ENCODE measurements at regions of chr17 and their contacts with region 1.

Region 1: DNA sequence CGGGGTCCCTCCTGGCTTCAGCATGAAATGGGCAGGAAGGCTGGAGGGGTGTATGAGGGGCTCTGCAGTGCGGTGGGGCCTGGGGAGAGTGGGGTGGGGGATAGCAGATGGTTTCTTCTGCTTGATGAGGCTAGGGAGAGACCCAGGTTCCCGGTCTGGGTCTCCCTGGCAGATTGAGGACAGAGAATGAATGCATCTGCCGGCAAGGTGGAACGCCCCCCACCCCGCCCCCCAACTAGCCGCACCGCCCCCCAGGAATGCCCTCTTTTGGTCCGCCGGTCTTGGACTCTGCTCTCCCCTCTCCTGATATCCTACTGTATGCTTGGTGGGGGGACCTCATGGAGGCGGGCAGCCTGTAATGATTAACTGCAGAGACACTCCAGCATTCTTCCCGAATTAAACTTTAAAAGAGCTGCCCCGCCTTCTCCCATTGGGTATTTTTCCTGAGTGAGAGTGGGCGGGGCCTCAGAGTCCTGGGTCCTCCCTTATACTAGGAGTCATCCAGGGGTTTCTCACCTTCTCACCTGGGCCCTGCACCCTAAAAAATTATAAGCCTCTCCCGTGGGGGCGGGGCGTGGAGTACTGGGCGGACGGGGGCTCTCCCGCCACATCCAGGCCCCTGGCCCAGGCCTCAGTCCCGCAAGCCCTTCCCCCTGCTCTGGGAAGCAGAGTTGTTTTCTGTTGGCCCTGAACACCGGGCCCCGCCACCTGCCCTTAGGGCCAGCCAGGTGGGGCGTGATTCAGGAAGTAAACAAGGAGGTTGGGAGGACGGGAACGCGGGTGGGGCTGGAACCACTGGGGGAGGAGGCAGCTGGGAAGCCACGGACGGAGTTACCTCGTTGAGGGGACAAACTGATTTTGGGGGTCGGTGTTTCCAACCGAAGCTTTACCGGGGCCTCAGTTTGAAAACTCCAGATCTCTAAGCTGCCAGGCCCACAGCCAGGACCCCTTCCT is 1.5 kb downstream of the GRB7 start:
- DNase-seq: peak; percentile 84 to 89
- H3K4me3 ChIP-seq: peak overlapping the region; percentile 83
- H3K27ac ChIP-seq: peak overlapping the region; percentile 93
- H3K4me1 ChIP-seq: peaks cover 41% of the 10 kb centered on the region
- H3K27me3 ChIP-seq: no peaks in the 10 kb centered on the region
- CTCF ChIP-seq: no peak

Region 2: GRCh38 chr17:39636927-39637736 is 102.1 kb before region 1 on chr17 and contains the start of gene STARD3:
- CTCF ChIA-PET with region 1: no interaction called
- POLR2A ChIA-PET with region 1: no interaction called
- intact Hi-C with region 1: loop called (anchors 5 kb)
- DNase-seq: peak; percentile 74 to 82
- H3K4me3 ChIP-seq: peak within 1 kb of the TSS; percentile 98
- H3K27ac ChIP-seq: peak within 1 kb of the TSS; percentile 64
- H3K4me1 ChIP-seq: peaks cover 26% of the 10 kb centered on the region
- H3K27me3 ChIP-seq: no peaks in the 10 kb centered on the region
- CTCF ChIP-seq: no peak; the same call in 1 of the 2 replicates
- total RNA-seq, gene STARD3: 47.7 and 55.9 TPM in 2 replicates

Region 3: GRCh38 chr17:39643271-39643670 is 95.9 kb before region 1 on chr17:
- CTCF ChIA-PET with region 1: no interaction called
- POLR2A ChIA-PET with region 1: interaction called, 17 read pairs
- intact Hi-C with region 1: no loop called
- DNase-seq: no peak
- H3K4me3 ChIP-seq: no peak overlapping the region
- H3K27ac ChIP-seq: no peak overlapping the region
- H3K4me1 ChIP-seq: peaks cover 6% of the 10 kb centered on the region
- H3K27me3 ChIP-seq: no peaks in the 10 kb centered on the region
- CTCF ChIP-seq: no peak

Region 4: GRCh38 chr17:39659279-39660010 is 79.8 kb before region 1 on chr17:
- CTCF ChIA-PET with region 1: no interaction called
- POLR2A ChIA-PET with region 1: no interaction called
- intact Hi-C with region 1: no loop called
- DNase-seq: no peak
- H3K4me3 ChIP-seq: no peak overlapping the region
- H3K27ac ChIP-seq: no peak overlapping the region
- H3K4me1 ChIP-seq: peaks cover 10% of the 10 kb centered on the region
- H3K27me3 ChIP-seq: no peaks in the 10 kb centered on the region
- CTCF ChIP-seq: no peak

Region 5: DNA sequence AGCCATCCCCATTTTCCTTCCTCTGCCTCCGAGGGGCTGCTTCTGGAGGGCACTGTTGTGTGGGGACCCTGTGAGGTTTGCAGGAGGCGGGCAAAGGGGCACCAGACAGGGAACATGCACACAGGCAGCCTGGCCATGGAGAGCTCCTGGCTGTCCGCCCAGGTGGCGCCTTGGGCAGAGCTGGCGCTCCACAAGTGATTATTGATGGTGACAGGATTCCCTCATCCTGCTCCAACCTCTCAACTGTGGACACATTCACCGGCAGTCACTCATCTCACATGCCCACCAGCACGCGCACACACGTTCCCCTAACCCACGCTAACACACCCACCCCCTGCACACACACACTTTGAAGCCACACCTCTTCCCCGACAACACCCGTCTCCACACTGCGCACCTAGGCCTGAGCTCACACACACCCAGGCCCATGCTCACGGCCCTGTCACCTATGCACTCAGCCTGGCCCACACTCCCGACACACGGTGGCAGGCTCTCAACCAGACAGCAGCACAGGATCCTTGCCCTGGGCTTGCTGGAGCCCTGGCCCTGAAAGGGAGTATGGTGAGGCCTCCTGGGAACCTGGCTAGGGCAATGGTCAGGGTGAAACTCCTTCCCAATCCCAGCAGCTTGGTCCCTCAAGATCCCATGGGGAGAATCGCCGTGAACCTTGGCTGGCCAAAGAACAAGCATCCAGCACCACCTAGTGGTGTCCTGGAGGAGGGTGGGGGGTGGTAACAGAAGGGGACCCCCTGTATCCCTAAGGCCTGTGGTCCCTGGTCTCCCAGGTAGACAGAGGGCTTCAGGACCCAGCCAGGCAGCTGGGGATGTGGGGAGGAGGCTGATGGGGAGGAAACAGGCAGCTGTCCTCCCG is 67.3 kb before region 1 on chr17:
- CTCF ChIA-PET with region 1: interaction called, 3 read pairs
- POLR2A ChIA-PET with region 1: no interaction called
- intact Hi-C with region 1: loop called (anchors 5 kb)
- DNase-seq: no peak
- H3K4me3 ChIP-seq: no peak overlapping the region
- H3K27ac ChIP-seq: no peak overlapping the region
- H3K4me1 ChIP-seq: peaks cover 52% of the 10 kb centered on the region
- H3K27me3 ChIP-seq: no peaks in the 10 kb centered on the region
- CTCF ChIP-seq: peak; percentile 63

Region 6: GRCh38 chr17:39699818-39700147 is 39.4 kb before region 1 on chr17 and contains the start of gene ERBB2:
- CTCF ChIA-PET with region 1: interaction called, 10 read pairs
- POLR2A ChIA-PET with region 1: no interaction called
- intact Hi-C with region 1: no loop called
- DNase-seq: peak; percentile 66 to 71
- H3K4me3 ChIP-seq: peak within 1 kb of the TSS; percentile 71
- H3K27ac ChIP-seq: peak within 1 kb of the TSS; percentile 20
- H3K4me1 ChIP-seq: peaks cover 45% of the 10 kb centered on the region
- H3K27me3 ChIP-seq: no peaks in the 10 kb centered on the region
- CTCF ChIP-seq: no peak
- total RNA-seq, gene ERBB2: 87.2 and 90.6 TPM in 2 replicates

Region 7: GRCh38 chr17:39722965-39723848 is 16.0 kb before region 1 on chr17:
- CTCF ChIA-PET with region 1: no interaction called
- POLR2A ChIA-PET with region 1: no interaction called
- intact Hi-C with region 1: no loop called
- DNase-seq: no peak
- H3K4me3 ChIP-seq: no peak overlapping the region
- H3K27ac ChIP-seq: no peak overlapping the region
- H3K4me1 ChIP-seq: no peaks in the 10 kb centered on the region
- H3K27me3 ChIP-seq: no peaks in the 10 kb centered on the region
- CTCF ChIP-seq: no peak

Region 8: DNA sequence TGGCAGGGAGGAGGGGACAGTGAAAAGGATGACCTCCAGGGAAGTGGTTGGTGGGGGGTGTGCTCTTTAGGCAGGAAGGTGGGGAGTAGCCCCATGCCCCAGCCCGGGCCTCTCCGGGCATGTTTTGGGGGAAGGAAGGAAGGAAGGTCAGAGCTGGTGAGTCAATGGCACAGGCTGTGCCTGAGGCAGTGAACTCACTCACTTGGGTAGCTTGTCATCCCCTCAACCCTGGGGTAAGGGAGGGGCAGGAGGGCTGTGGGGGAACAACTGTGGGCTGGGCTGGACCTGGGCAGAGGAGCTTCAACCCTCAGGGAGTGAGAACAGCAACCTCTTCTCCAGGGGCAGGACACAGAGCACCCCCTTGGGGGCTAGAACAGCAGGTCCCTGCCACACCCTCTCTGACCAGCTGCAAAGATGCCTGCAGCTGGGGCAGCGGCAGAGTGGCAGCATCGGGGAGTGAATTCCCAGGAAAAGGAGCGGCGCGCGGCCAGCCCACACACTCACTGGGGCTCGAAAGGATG is 282.3 kb after region 1 on chr17:
- CTCF ChIA-PET with region 1: no interaction called
- POLR2A ChIA-PET with region 1: no interaction called
- intact Hi-C with region 1: loop called (anchors 5 kb)
- DNase-seq: peak; percentile 84 to 90
- H3K4me3 ChIP-seq: no peak overlapping the region
- H3K27ac ChIP-seq: peak overlapping the region; percentile 43; the same call in 1 of the 2 replicates
- H3K4me1 ChIP-seq: peaks cover 63% of the 10 kb centered on the region
- H3K27me3 ChIP-seq: no peaks in the 10 kb centered on the region
- CTCF ChIP-seq: no peak